A549 (cell line): ENCODE measurements at regions of chr11 and their contacts with region 1.

Region 1: GRCh38 chr11:45102810-45103621 is 43.4 kb upstream of the PRDM11 start:
- DNase-seq: peak; percentile 66 to 74
- ATAC-seq: peak; percentile 49 to 73; a peak in 5 of 6 replicates
- H3K4me3 ChIP-seq: no peak overlapping the region
- H3K27ac ChIP-seq: peak overlapping the region; percentile 35 to 68; a peak in 4 of 6 replicates
- H3K4me1 ChIP-seq: peaks cover 8% of the 10 kb centered on the region; the same call in 2 of the 3 replicates
- CTCF ChIP-seq: peak; percentile 95
- EP300 ChIP-seq: no peak
- POLR2A ChIP-seq: no peak
- RAD21 ChIP-seq: peak; percentile 97 to 99

Region 2: DNA sequence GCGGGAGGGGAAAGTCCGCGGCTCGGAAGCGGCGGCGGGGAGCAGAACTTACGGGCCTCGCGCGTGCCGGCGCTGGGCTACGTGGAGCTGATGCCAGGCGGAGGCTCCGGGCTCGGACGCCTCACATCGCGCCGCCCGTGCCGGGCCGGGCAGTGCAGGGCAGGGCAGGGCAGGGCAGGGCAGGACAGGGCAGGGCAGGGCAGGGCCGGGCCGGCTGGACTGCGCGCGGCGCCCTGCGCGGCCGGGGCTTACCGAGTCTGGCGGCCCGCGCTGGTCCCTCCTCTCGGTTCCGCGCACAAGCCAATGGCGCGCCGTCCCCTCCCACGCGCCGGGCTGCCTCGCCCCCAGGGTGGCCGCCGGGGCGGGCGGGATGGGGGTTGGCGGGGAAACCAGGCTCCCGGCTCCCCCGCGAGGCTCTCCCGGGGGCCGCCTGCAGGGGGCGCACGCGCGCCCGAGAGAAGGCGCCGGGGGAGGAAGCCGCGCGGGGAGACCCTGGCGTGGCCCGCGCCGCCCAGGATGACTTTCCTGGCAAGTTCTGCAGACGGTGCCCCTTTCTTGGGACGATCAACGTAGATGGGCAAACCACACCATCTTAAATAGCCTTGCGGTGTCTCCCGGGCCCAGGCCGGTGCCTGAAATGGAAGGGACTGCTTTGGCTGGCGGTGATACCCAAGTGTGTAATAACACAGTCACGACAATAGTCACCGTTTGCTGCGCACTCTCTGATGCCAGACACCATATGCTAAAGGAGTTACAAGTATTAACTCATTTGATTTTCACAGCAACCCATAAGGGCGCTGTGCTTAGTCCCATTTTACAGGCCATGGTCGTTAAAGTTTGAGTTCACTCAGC is 152.2 kb before region 1 on chr11 and contains the start of gene TP53I11:
- CTCF ChIA-PET with region 1: interaction called, 1,740 read pairs
- POLR2A ChIA-PET with region 1: no interaction called
- DNase-seq: peak; percentile 53 to 78
- ATAC-seq: peak; percentile 57 to 86
- H3K4me3 ChIP-seq: peak within 1 kb of the TSS; percentile 99
- H3K27ac ChIP-seq: peak within 1 kb of the TSS; percentile 92 to 95
- H3K4me1 ChIP-seq: peaks cover 30% of the 10 kb centered on the region
- CTCF ChIP-seq: peak; percentile 89
- EP300 ChIP-seq: no peak
- POLR2A ChIP-seq: peak; percentile 64
- RAD21 ChIP-seq: peak in 1 of 2 experiments; percentile 51; a peak in 1 of 5 replicates
- polyA plus RNA-seq, gene TP53I11: 11.2 and 20.7 TPM in 2 replicates

Region 3: GRCh38 chr11:44977476-44977984 is 125.5 kb before region 1 on chr11:
- CTCF ChIA-PET with region 1: interaction called, 49 read pairs
- POLR2A ChIA-PET with region 1: no interaction called
- DNase-seq: peak; percentile 34 to 36
- ATAC-seq: peak in 1 of 2 experiments; percentile 45; a peak in 3 of 6 replicates
- H3K4me3 ChIP-seq: no peak overlapping the region
- H3K27ac ChIP-seq: peak overlapping the region; percentile 18 to 81; a peak in 3 of 6 replicates
- H3K4me1 ChIP-seq: peaks cover 42% of the 10 kb centered on the region
- CTCF ChIP-seq: peak; percentile 29; the same call in 2 of the 3 replicates
- EP300 ChIP-seq: no peak
- POLR2A ChIP-seq: no peak
- RAD21 ChIP-seq: peak in 1 of 2 experiments; percentile 41; a peak in 2 of 5 replicates

Region 4: DNA sequence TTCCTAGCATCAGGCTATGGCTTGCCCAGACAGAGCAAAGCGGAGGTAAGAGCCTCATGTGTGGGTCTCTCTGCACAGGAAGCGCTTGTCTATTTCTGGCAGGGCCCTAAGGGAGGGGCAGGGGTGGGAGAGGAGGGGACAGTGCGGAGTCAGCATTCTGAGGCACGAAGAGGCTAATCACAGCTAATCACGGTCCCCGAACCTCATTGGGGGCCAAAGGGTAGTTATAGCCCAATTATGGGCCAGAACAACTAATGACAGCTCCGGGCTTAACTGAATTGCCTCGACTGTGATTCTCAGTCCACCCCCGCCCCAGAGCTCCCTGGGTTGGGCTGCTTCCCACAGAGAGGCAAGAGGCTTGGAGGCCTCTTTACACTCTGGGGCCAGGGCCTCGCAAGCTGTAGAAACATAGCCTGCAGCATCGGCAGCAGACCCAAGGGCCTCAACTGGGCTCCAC is 29.3 kb before region 1 on chr11:
- CTCF ChIA-PET with region 1: interaction called, 20 read pairs
- POLR2A ChIA-PET with region 1: no interaction called
- DNase-seq: no peak
- ATAC-seq: no peak
- H3K4me3 ChIP-seq: no peak overlapping the region
- H3K27ac ChIP-seq: no peak overlapping the region
- H3K4me1 ChIP-seq: no peaks in the 10 kb centered on the region
- CTCF ChIP-seq: no peak
- EP300 ChIP-seq: no peak
- POLR2A ChIP-seq: no peak
- RAD21 ChIP-seq: no peak

Region 5: DNA sequence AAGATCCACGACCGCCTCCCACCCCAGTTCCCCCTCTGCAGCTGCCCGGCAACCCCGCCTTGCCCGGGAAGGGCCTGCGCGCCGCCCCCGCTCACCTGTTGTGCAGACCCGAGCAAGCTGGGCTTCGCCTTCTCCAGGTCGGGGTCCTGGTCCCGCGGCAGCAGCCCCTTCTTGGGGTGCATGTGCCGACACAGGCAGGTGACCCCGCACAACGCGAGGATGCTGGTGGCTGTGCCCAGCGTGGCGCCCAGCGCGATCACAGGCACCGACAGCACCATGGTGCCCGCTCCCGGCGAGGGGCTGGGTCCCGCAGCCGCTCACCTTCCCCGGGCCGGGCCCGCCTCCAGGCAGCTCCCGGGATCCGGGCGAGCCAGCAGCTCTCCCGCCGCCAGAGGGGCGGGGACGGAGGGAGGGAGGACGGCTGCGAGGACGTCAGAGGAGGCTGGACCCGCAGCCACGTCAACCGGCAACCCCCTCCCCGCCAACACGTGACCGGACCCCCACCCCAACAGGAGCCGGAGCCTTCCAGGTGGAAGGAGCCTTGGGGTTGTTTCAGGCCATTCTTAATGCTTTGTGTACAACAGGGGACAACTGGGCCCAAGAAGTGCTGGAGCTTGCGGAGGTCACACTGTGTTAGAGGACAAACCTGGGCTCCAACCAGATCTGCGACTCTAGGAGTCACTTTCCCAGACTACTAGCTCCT is 183.1 kb after region 1 on chr11 and contains the start of gene SYT13:
- CTCF ChIA-PET with region 1: interaction called, 64 read pairs
- POLR2A ChIA-PET with region 1: no interaction called
- DNase-seq: peak; percentile 30 to 62
- ATAC-seq: peak; percentile 86 to 91
- H3K4me3 ChIP-seq: peak within 1 kb of the TSS; percentile 65
- H3K27ac ChIP-seq: peak within 1 kb of the TSS; percentile 73 to 87
- H3K4me1 ChIP-seq: peaks cover 12% of the 10 kb centered on the region
- CTCF ChIP-seq: no peak
- EP300 ChIP-seq: no peak
- POLR2A ChIP-seq: peak; percentile 24; the same call in 1 of the 2 replicates
- RAD21 ChIP-seq: no peak
- polyA plus RNA-seq, gene SYT13: 8.1 and 10.7 TPM in 2 replicates

Region 6: GRCh38 chr11:45332276-45332934 is 229.4 kb after region 1 on chr11:
- CTCF ChIA-PET with region 1: interaction called, 320 read pairs
- POLR2A ChIA-PET with region 1: no interaction called
- DNase-seq: peak; percentile 29 to 64
- ATAC-seq: peak; percentile 69 to 88; a peak in 5 of 6 replicates
- H3K4me3 ChIP-seq: no peak overlapping the region
- H3K27ac ChIP-seq: no peak overlapping the region
- H3K4me1 ChIP-seq: no peaks in the 10 kb centered on the region; the same call in 2 of the 3 replicates
- CTCF ChIP-seq: peak; percentile 87
- EP300 ChIP-seq: no peak
- POLR2A ChIP-seq: no peak
- RAD21 ChIP-seq: peak; percentile 75 to 90